Aorta (tissue), 5 donors: ENCODE measurements at regions of chr12 and their contacts with region 1.

Region 1: GRCh38 chr12:9118158-9118557 is 2.4 kb upstream of the A2M start:
- DNase-seq: peak in 1 of 2 donors; percentile 60
- ATAC-seq: peak; percentile 15
- H3K4me3 ChIP-seq: peak overlapping the region in 1 of 2 donors; percentile 34
- H3K27ac ChIP-seq: peak overlapping the region; percentile 94 to 99
- H3K4me1 ChIP-seq: peaks cover 2 to 6% of the 10 kb centered on the region in 2 donors
- H3K27me3 ChIP-seq: no peaks in the 10 kb centered on the region

Region 2: GRCh38 chr12:9024512-9024911 is 93.6 kb before region 1 on chr12:
- intact Hi-C with region 1: no loop called
- DNase-seq: no peak
- ATAC-seq: no peak
- H3K4me3 ChIP-seq: no peak overlapping the region
- H3K27ac ChIP-seq: no peak overlapping the region
- H3K4me1 ChIP-seq: no peaks in the 10 kb centered on the region
- H3K27me3 ChIP-seq: no peaks in the 10 kb centered on the region

Region 3: DNA sequence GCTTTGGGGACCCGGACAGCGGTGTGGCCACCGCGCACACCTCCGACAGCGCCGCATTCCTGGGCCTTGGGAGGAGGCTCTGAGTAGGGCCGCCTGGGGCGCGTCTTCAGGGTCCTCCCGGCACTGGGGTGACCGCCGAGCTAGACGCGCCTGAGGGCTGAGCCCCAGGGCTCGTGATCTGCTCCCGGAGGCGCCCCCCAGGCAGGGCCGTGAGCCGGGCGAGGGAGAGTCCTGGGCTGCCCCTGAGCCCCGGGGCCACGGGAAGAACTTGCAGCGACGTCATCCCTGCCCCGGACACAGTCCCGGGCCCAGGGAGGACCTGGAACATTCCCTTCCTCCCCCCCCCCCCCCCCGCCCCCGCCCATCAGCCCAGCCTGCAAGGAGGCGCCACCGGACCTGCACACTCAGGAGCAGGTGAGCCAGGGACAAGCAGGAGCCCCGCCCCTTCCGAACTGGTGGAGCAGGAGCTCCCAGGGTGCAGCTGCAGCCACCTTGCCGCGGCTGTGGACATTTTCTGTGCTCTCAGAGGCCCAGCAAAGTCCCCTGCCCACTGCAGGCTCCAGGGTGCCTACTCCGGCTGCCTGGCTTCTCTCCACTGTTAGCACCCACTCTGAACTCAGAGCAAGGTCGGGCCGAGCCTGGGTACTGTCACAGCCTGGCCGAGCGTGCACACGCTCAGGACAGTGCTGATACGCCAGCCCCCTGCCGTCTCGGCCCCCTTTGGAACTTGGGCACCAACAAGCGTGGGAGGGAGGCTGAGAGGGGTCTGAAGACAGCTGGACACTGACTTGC is 53.1 kb before region 1 on chr12:
- intact Hi-C with region 1: loop called (anchors 5 kb)
- DNase-seq: peak; percentile 85 to 88
- ATAC-seq: peak; percentile 94
- H3K4me3 ChIP-seq: peak overlapping the region; percentile 45 to 95
- H3K27ac ChIP-seq: peak overlapping the region; percentile 75 to 94
- H3K4me1 ChIP-seq: no peaks in the 10 kb centered on the region
- H3K27me3 ChIP-seq: no peaks in the 10 kb centered on the region

Region 4: GRCh38 chr12:9073076-9073475 is 45.1 kb before region 1 on chr12:
- intact Hi-C with region 1: loop called (anchors 5 kb)
- DNase-seq: no peak
- ATAC-seq: no peak
- H3K4me3 ChIP-seq: no peak overlapping the region
- H3K27ac ChIP-seq: no peak overlapping the region
- H3K4me1 ChIP-seq: no peaks in the 10 kb centered on the region
- H3K27me3 ChIP-seq: no peaks in the 10 kb centered on the region

Region 5: GRCh38 chr12:9244894-9245293 is 126.7 kb after region 1 on chr12:
- intact Hi-C with region 1: loop called in 1 of 2 experiments (anchors 10 kb)
- DNase-seq: no peak
- ATAC-seq: no peak
- H3K4me3 ChIP-seq: no peak overlapping the region
- H3K27ac ChIP-seq: no peak overlapping the region
- H3K4me1 ChIP-seq: no peaks in the 10 kb centered on the region
- H3K27me3 ChIP-seq: no peaks in the 10 kb centered on the region

Region 6: GRCh38 chr12:9276990-9277389 is 158.8 kb after region 1 on chr12:
- intact Hi-C with region 1: loop called (anchors 5 kb)
- DNase-seq: no peak
- ATAC-seq: no peak
- H3K4me3 ChIP-seq: no peak overlapping the region
- H3K27ac ChIP-seq: no peak overlapping the region
- H3K4me1 ChIP-seq: no peaks in the 10 kb centered on the region
- H3K27me3 ChIP-seq: peaks cover 0 to 5% of the 10 kb centered on the region in 2 donors